ENCODE measurements at regions of chr14 and their contacts with region 1.

Region 1: GRCh38 chr14:74362361-74362915 is 14.2 kb downstream of the VRTN start:
- DNase-seq: peak; percentile 79
- H3K4me3 ChIP-seq: no peak overlapping the region
- H3K27ac ChIP-seq: no peak overlapping the region
- H3K4me1 ChIP-seq: no peaks in the 10 kb centered on the region
- H3K27me3 ChIP-seq: peaks cover 8% of the 10 kb centered on the region
- CTCF ChIP-seq: peak; percentile 90 to 95 (median 93)
- EP300 ChIP-seq: no peak
- POLR2A ChIP-seq: no peak

Region 2: GRCh38 chr14:74478996-74479635 is 116.7 kb after region 1 on chr14:
- in situ Hi-C with region 1: loop called in 2 of 4 experiments (anchors 10 kb)
- intact Hi-C with region 1: loop called (anchors 10 kb)
- DNase-seq: no peak
- H3K4me3 ChIP-seq: no peak overlapping the region
- H3K27ac ChIP-seq: no peak overlapping the region
- H3K4me1 ChIP-seq: no peaks in the 10 kb centered on the region
- H3K27me3 ChIP-seq: no peaks in the 10 kb centered on the region
- CTCF ChIP-seq: peak; percentile 42 to 61 (median 49)
- EP300 ChIP-seq: no peak
- POLR2A ChIP-seq: no peak

Measured in transverse colon (tissue), 4 donors.